ENCODE measurements at regions of chr12 and their contacts with region 1.

Region 1: GRCh38 chr12:62466594-62467491 is at the start of gene MON2:
- DNase-seq: peak; percentile 20
- H3K4me3 ChIP-seq: peak within 1 kb of the TSS; percentile 84
- H3K27me3 ChIP-seq: no peaks in the 10 kb centered on the region
- CTCF ChIP-seq: peak; percentile 10; the same call in 1 of the 2 replicates
- polyA plus RNA-seq, gene MON2: 7.8 and 14.8 TPM in 2 replicates

Region 2: DNA sequence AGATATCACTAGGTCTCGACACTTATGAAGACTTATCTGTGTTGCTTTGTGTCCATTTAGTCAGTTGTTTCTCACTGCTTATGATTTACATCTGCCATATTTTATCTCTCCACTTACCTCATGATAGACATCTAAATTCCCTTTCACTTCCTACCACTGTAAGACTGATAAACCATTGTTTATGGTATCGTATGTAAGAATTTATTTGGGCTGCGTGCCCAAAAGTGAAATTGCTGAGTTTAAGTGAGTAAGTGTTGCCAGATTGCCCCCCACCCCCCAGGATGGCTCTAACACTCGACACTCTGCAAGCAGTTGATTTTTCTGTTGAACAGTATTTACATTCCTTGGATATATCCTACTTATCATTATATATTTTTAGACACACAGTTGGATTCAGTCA is 70.1 kb before region 1 on chr12:
- CTCF ChIA-PET with region 1: no interaction called
- POLR2A ChIA-PET with region 1: no interaction called
- DNase-seq: no peak
- H3K4me3 ChIP-seq: no peak overlapping the region
- H3K27me3 ChIP-seq: no peaks in the 10 kb centered on the region
- CTCF ChIP-seq: no peak

Region 3: DNA sequence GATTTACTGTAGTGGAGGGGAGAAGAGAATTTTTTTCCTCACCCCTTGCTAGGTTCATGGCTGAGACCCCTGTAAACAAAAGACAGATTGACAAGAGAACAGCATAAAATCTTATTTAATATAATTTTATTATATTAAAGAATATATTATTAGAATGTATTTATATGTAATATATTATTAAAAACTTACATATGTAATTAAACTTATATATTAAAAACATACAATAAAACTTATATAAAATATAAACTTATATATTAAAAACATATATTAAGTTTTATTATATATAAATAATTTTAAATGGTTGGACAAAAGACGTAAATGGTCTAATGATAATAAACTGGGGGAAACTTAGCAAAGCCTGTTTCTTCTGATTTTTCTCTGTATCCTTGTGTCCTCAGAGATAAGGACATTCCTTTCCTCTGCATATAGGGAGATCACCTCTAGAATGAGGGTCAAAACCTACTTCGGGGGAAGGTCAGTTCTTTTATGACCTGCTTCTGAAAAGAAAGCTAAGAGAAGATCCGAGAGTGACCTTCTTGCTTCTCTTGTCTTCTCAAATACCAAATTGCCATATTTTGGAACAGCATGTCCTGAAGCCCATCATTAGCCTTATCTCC is 477.0 kb after region 1 on chr12:
- CTCF ChIA-PET with region 1: no interaction called
- POLR2A ChIA-PET with region 1: interaction called, 17 read pairs
- DNase-seq: no peak
- H3K4me3 ChIP-seq: no peak overlapping the region
- H3K27me3 ChIP-seq: peaks cover 8% of the 10 kb centered on the region
- CTCF ChIP-seq: no peak